Activated CD4-positive, alpha-beta memory T cell treated with anti-CD3 and anti-CD28 coated beads for 36 hours (primary cell): ENCODE measurements at regions of chr9 and their contacts with region 1.

Region 1: GRCh38 chr9:30765318-30765717 is 1619.1 kb upstream of the ACO1 start:
- DNase-seq: no peak
- H3K4me3 Mint-ChIP-seq: no peak overlapping the region
- H3K27ac Mint-ChIP-seq: no peak overlapping the region
- H3K4me1 Mint-ChIP-seq: no peaks in the 10 kb centered on the region
- H3K27me3 Mint-ChIP-seq: peaks cover 1% of the 10 kb centered on the region

Region 2: GRCh38 chr9:30799527-30800101 is 34.3 kb after region 1 on chr9:
- CTCF ChIA-PET with region 1: no interaction called
- POLR2A ChIA-PET with region 1: no interaction called
- intact Hi-C with region 1: no loop called
- DNase-seq: no peak
- H3K4me3 Mint-ChIP-seq: no peak overlapping the region
- H3K27ac Mint-ChIP-seq: no peak overlapping the region
- H3K4me1 Mint-ChIP-seq: no peaks in the 10 kb centered on the region
- H3K27me3 Mint-ChIP-seq: no peaks in the 10 kb centered on the region

Region 3: GRCh38 chr9:30815585-30815984 is 50.3 kb after region 1 on chr9:
- CTCF ChIA-PET with region 1: no interaction called
- POLR2A ChIA-PET with region 1: no interaction called
- intact Hi-C with region 1: loop called (anchors 10 kb)
- DNase-seq: no peak
- H3K4me3 Mint-ChIP-seq: no peak overlapping the region
- H3K27ac Mint-ChIP-seq: no peak overlapping the region
- H3K4me1 Mint-ChIP-seq: no peaks in the 10 kb centered on the region
- H3K27me3 Mint-ChIP-seq: no peaks in the 10 kb centered on the region

Region 4: GRCh38 chr9:32426278-32426939 is 1661.1 kb after region 1 on chr9:
- CTCF ChIA-PET with region 1: no interaction called
- POLR2A ChIA-PET with region 1: no interaction called
- intact Hi-C with region 1: no loop called
- DNase-seq: no peak
- H3K4me3 Mint-ChIP-seq: no peak overlapping the region
- H3K27ac Mint-ChIP-seq: no peak overlapping the region
- H3K4me1 Mint-ChIP-seq: no peaks in the 10 kb centered on the region
- H3K27me3 Mint-ChIP-seq: no peaks in the 10 kb centered on the region